CD4-positive, alpha-beta T cell (primary cell): ENCODE measurements at regions of chr12 and their contacts with region 1.

Region 1: DNA sequence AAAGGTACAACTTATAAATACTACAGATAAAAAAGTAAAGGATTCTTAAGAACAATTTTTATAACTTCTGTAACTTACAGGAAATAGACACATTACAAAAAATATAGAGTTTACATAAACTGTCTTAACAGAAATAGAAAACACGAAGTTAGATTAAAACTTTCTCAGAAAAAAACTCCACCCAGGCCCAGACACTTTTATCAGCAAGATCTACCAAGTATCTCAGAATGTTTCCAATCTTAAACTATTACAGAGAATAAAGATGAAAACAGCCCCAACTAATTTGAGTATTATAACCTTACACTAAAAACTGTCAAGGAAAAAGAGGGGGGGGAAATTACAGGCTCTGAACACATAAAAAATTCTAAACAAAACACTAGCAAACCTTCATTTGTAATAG is 8.2 kb downstream of the ZFC3H1 start:
- DNase-seq: no peak
- ATAC-seq: no peak
- H3K4me3 ChIP-seq: no peak overlapping the region
- H3K4me3 Mint-ChIP-seq: peak overlapping the region; percentile 7
- H3K27ac ChIP-seq: no peak overlapping the region
- H3K27ac Mint-ChIP-seq: peak overlapping the region; percentile 18
- H3K4me1 ChIP-seq: no peaks in the 10 kb centered on the region
- H3K4me1 Mint-ChIP-seq: peaks cover 45% of the 10 kb centered on the region
- H3K27me3 ChIP-seq: no peaks in the 10 kb centered on the region
- H3K27me3 Mint-ChIP-seq: no peaks in the 10 kb centered on the region
- CTCF ChIP-seq: no peak

Region 2: GRCh38 chr12:71626098-71626497 is 29.4 kb before region 1 on chr12:
- CTCF ChIA-PET with region 1: no interaction called
- POLR2A ChIA-PET with region 1: no interaction called
- intact Hi-C with region 1: loop called in 1 of 2 experiments (anchors 5 kb)
- DNase-seq: peak in 2 of 14 experiments; percentile 3 to 9
- ATAC-seq: no peak
- H3K4me3 ChIP-seq: no peak overlapping the region
- H3K4me3 Mint-ChIP-seq: no peak overlapping the region
- H3K27ac ChIP-seq: no peak overlapping the region
- H3K27ac Mint-ChIP-seq: peak overlapping the region; percentile 34
- H3K4me1 ChIP-seq: no peaks in the 10 kb centered on the region
- H3K4me1 Mint-ChIP-seq: peaks cover 28% of the 10 kb centered on the region
- H3K27me3 ChIP-seq: no peaks in the 10 kb centered on the region
- H3K27me3 Mint-ChIP-seq: no peaks in the 10 kb centered on the region
- CTCF ChIP-seq: no peak

Region 3: GRCh38 chr12:71694099-71694820 is 38.8 kb after region 1 on chr12:
- CTCF ChIA-PET with region 1: no interaction called
- POLR2A ChIA-PET with region 1: no interaction called
- intact Hi-C with region 1: loop called in 1 of 2 experiments (anchors 5 kb)
- DNase-seq: no peak
- ATAC-seq: no peak
- H3K4me3 ChIP-seq: no peak overlapping the region
- H3K4me3 Mint-ChIP-seq: no peak overlapping the region
- H3K27ac ChIP-seq: no peak overlapping the region
- H3K27ac Mint-ChIP-seq: no peak overlapping the region
- H3K4me1 ChIP-seq: no peaks in the 10 kb centered on the region
- H3K4me1 Mint-ChIP-seq: peaks cover 20% of the 10 kb centered on the region
- H3K27me3 ChIP-seq: no peaks in the 10 kb centered on the region
- H3K27me3 Mint-ChIP-seq: no peaks in the 10 kb centered on the region
- CTCF ChIP-seq: no peak